Lower leg skin (tissue), 4 donors: ENCODE measurements at regions of chr2 and their contacts with region 1.

Region 1: GRCh38 chr2:159118115-159118858 is 149.8 kb downstream of the TANC1 start:
- DNase-seq: peak; percentile 89 to 97
- H3K4me3 ChIP-seq: no peak overlapping the region
- CTCF ChIP-seq: peak in 1 of 3 donors; percentile 48
- POLR2A ChIP-seq: no peak

Region 2: GRCh38 chr2:159030674-159031380 is 87.5 kb before region 1 on chr2:
- intact Hi-C with region 1: loop called (anchors 5 kb)
- DNase-seq: no peak
- H3K4me3 ChIP-seq: no peak overlapping the region
- CTCF ChIP-seq: no peak
- POLR2A ChIP-seq: no peak

Region 3: DNA sequence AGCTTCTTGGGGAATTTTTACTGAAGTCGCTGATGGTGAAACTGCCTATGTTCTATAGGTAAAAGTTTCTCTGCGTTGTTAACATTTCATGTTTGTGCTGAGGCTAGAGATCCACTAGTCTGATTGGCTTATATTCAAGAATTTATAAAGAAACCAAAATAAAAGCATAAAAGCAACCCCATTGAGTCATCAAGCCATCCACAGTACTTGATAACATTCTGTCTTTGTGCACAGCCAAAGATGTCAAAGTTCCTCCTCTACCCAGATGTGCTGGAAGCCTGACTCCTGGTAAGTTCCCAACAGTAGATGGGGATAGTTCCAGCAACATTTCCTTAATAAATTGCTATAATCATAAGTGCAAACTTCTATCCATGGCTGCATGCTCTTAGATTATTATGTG is 42.0 kb before region 1 on chr2:
- intact Hi-C with region 1: no loop called
- DNase-seq: no peak
- H3K4me3 ChIP-seq: no peak overlapping the region
- CTCF ChIP-seq: no peak
- POLR2A ChIP-seq: no peak